ENCODE measurements at regions of chr5 and their contacts with region 1.

Region 1: DNA sequence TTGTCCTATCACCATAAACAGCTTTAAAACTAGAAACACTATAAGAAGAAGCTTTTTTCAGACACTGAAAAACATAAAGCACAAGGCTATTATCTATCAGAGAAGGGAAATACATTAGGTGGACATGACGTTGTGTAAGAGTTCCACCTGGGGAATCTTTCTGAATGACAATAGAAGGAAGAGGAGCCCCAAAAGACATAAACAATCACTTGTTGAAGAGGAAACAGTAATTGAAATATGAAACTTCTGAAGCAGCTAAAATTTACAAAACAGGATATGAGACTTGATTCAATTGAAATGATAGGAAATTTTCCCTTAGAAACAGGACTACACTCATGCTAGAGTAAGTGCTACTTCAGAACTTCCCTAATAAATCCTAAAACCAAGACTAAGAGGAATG is 933.6 kb downstream of the EFNA5 start:
- DNase-seq: no peak
- ATAC-seq: no peak
- H3K4me3 ChIP-seq: no peak overlapping the region
- H3K27ac ChIP-seq: no peak overlapping the region
- H3K4me1 ChIP-seq: no peaks in the 10 kb centered on the region
- H3K27me3 ChIP-seq: no peaks in the 10 kb centered on the region
- CTCF ChIP-seq: no peak
- POLR2A ChIP-seq: no peak
- RAD21 ChIP-seq: no peak

Region 2: GRCh38 chr5:107633171-107633901 is 896.2 kb after region 1 on chr5:
- CTCF ChIA-PET with region 1: no interaction called
- POLR2A ChIA-PET with region 1: no interaction called
- RAD21 ChIA-PET with region 1: no interaction called
- intact Hi-C with region 1: loop called (anchors 5 kb)
- DNase-seq: no peak
- ATAC-seq: no peak
- H3K4me3 ChIP-seq: no peak overlapping the region
- H3K27ac ChIP-seq: no peak overlapping the region
- H3K4me1 ChIP-seq: no peaks in the 10 kb centered on the region
- H3K27me3 ChIP-seq: no peaks in the 10 kb centered on the region
- CTCF ChIP-seq: no peak
- POLR2A ChIP-seq: no peak
- RAD21 ChIP-seq: no peak

Measured in HCT116 (cell line).